Naive thymus-derived CD8-positive, alpha-beta T cell (primary cell): ENCODE measurements at regions of chr2 and their contacts with region 1.

Region 1: GRCh38 chr2:120174963-120175581 is 48.1 kb downstream of the TMEM185B start:
- DNase-seq: peak in 5 of 10 donors; percentile 25 to 63 (median 55)
- ATAC-seq: no peak
- H3K4me3 Mint-ChIP-seq: peak overlapping the region in 1 of 10 donors; percentile 5
- H3K27ac Mint-ChIP-seq: peak overlapping the region; percentile 49 to 98 (median 88)
- H3K4me1 Mint-ChIP-seq: peaks cover 13 to 53% (median 47%) of the 10 kb centered on the region in 4 donors
- H3K27me3 Mint-ChIP-seq: no peaks in the 10 kb centered on the region

Region 2: DNA sequence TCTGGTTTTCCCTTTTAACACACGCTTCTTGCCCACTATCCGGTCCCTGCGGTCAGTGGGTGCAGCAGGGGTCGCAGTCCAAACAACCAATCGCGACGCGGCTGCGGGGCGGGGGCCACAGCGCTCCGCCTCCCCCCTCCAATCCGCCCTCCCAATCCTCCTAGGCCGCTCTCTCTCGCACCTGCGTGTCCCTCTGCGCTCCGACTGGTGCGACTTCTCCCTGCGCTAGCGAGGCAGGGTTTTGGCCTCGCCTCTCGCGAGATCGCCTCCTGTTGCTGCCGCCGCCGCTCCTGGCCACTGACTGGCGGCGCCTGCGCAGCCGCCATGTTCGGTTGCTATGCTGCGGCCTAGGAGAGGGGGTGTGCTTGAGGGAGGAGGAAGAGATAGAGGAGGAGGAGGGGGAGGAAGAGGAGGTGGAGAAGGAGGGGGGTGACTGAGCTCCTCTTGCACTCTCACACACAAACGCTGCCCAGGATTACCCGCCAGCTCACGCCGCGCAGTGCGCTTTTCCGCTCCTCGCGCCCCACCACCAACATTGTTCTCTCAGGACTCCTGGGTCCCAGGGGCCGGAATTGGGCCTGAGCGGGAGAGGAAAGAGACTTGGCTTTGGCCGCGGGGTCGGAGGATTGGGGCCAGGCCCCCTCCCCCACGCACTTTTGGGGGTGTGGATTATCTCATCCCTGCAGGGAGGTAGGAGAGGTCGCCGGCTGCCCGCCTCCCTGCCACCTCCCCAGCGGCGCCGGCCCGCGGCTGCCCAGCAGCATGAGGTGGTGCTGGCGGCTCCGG is 415.4 kb before region 1 on chr2 and contains the start of gene PTPN4:
- POLR2A ChIA-PET with region 1: interaction called, 21 read pairs
- DNase-seq: peak; percentile 90 to 99 (median 96)
- ATAC-seq: peak; percentile 91 to 92
- H3K4me3 Mint-ChIP-seq: peak within 1 kb of the TSS; percentile 82 to 98 (median 94)
- H3K27ac Mint-ChIP-seq: peak within 1 kb of the TSS; percentile 35 to 99 (median 92)
- H3K4me1 Mint-ChIP-seq: peaks cover 18 to 49% (median 43%) of the 10 kb centered on the region in 4 donors
- H3K27me3 Mint-ChIP-seq: no peaks in the 10 kb centered on the region
- polyA plus RNA-seq, gene PTPN4: 79.4 to 111 (median 93.0) TPM

Region 3: GRCh38 chr2:120109186-120110061 is 65.6 kb before region 1 on chr2:
- POLR2A ChIA-PET with region 1: interaction called, 30 read pairs
- DNase-seq: peak in 4 of 10 donors; percentile 5 to 65 (median 53)
- ATAC-seq: peak; percentile 83 to 95
- H3K4me3 Mint-ChIP-seq: peak overlapping the region; percentile 55 to 78 (median 72)
- H3K27ac Mint-ChIP-seq: peak overlapping the region; percentile 7 to 92 (median 49)
- H3K4me1 Mint-ChIP-seq: peaks cover 20 to 34% (median 31%) of the 10 kb centered on the region in 4 donors
- H3K27me3 Mint-ChIP-seq: no peaks in the 10 kb centered on the region

Region 4: GRCh38 chr2:120150040-120150482 is 25.0 kb before region 1 on chr2:
- POLR2A ChIA-PET with region 1: no interaction called
- DNase-seq: no peak
- ATAC-seq: no peak
- H3K4me3 Mint-ChIP-seq: no peak overlapping the region
- H3K27ac Mint-ChIP-seq: no peak overlapping the region
- H3K4me1 Mint-ChIP-seq: no peaks in the 10 kb centered on the region
- H3K27me3 Mint-ChIP-seq: no peaks in the 10 kb centered on the region

Region 5: DNA sequence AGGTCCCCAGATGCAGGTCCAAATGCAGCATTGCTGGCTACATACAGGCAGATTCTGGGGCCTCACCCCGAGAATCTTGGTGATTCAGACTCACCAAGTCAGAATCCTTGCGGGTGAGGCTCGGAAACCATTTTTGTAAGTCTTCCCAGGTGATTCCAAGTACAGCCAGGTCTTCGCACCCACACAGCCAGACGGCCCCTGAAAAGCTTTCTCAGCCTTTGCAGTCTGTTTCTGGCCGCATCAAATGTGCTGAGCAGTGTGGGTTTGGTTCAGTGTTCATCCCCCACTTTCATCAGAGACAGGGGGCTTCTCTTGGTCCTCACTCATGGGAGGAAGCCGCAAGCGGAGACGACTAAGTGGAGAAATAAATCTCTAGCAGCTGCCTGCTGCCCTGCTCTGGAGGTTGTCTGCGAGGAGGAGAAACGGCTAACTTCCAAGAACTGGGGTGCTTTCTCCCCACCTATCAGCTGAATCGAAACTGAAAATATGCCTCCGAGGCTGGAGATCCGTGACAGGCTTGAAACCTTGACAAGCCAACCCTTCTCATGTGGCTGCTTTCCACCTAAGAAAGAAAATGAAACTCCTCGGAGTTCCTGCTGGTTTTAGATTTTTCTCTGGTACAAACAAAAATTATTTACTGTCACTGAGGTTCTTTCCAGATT is 57.0 kb after region 1 on chr2:
- POLR2A ChIA-PET with region 1: interaction called, 20 read pairs
- DNase-seq: peak in 9 of 10 donors; percentile 51 to 81 (median 65)
- ATAC-seq: peak; percentile 90 to 91
- H3K4me3 Mint-ChIP-seq: peak overlapping the region; percentile 89 to 97 (median 94)
- H3K27ac Mint-ChIP-seq: peak overlapping the region; percentile 94 to 98 (median 97)
- H3K4me1 Mint-ChIP-seq: peaks cover 13 to 67% (median 60%) of the 10 kb centered on the region in 4 donors
- H3K27me3 Mint-ChIP-seq: no peaks in the 10 kb centered on the region